Activated CD4-positive, alpha-beta T cell treated with anti-CD3 and anti-CD28 coated beads for 36 hours (primary cell): ENCODE measurements at regions of chr17 and their contacts with region 1.

Region 1: DNA sequence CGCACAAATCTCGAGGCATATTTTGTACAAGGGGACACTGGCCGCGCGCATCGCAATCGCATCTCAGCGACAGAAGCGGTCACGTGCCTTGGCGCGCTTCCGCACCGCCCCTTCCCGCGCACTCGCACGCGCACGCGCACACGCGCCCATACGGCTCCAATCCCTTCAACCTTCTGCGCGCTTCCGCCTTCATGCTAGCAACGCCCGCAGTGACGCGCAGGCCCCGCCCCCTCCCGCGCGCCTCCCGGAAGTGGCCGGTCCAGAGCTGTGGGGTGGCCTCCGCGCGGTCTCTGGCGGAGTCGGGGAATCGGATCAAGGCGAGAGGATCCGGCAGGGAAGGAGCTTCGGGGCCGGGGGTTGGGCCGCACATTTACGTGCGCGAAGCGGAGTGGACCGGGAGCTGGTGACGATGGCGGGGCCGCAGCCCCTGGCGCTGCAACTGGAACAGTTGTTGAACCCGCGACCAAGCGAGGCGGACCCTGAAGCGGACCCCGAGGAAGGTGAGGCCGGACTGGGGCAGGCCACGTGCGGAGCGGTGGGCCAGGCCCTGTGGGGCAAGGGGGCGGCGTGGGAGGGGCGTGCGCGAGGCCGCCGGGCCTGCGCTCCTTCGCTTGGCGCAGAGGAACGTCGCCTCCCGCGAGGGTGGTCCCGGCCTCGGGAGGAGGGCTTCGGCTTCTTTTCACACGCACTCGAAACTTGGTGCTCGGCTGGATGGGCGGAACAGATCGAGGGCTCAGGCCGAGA is at the start of gene AATF:
- DNase-seq: peak; percentile 97
- ATAC-seq: peak; percentile 99
- H3K4me3 Mint-ChIP-seq: peak within 1 kb of the TSS; percentile 90
- H3K27ac Mint-ChIP-seq: peak within 1 kb of the TSS; percentile 94
- H3K4me1 Mint-ChIP-seq: peaks cover 47% of the 10 kb centered on the region
- H3K27me3 Mint-ChIP-seq: peaks cover 28% of the 10 kb centered on the region
- total RNA-seq, gene AATF: 87.9 to 149 TPM

Region 2: DNA sequence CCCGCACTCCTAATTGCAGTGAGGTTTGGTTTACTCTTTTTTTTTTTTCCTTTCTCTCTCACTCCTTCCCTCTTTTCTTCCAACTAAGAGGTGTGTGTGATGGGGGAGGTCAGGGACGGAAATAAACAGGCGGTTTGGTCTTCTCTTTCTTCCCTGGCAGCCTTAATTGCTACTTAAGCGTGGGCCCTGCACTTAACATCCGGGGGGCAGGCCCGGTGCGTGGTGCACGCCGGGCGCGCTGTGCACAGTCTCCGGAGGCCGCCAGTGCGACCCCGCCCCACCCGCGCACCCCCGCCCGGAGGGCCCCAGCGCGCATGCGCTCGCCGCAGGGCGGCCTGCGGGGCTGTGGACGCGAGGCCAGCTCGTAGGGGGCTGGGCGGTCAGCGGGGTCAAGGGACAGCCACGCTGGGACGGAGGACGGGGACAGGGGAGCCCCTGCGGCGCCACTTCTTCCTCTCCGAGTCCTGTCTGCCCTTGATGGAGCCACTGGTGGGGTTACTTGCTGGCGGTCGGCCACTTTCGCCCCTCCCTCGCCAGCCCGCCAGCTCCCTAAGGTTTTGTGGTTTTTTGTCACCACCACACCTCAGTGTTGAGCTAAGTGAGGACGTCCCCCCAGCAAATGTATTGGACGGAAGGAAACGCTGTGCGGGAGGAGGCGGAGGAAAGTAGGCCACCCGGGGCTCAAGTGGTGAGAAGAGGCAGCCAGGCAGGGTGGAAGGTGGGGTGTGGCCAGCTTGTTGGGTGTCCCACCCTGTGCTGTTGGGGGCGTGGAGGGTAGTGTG is 226.6 kb before region 1 on chr17:
- CTCF ChIA-PET with region 1: interaction called, 4 read pairs
- POLR2A ChIA-PET with region 1: no interaction called
- intact Hi-C with region 1: loop called in 1 of 2 experiments (anchors 1 kb)
- DNase-seq: peak; percentile 91
- ATAC-seq: peak; percentile 94
- H3K4me3 Mint-ChIP-seq: peak overlapping the region; percentile 76
- H3K27ac Mint-ChIP-seq: peak overlapping the region; percentile 98
- H3K4me1 Mint-ChIP-seq: peaks cover 46% of the 10 kb centered on the region
- H3K27me3 Mint-ChIP-seq: no peaks in the 10 kb centered on the region

Region 3: GRCh38 chr17:36791150-36791941 is 157.5 kb before region 1 on chr17:
- CTCF ChIA-PET with region 1: no interaction called
- POLR2A ChIA-PET with region 1: no interaction called
- intact Hi-C with region 1: no loop called
- DNase-seq: no peak
- ATAC-seq: no peak
- H3K4me3 Mint-ChIP-seq: no peak overlapping the region
- H3K27ac Mint-ChIP-seq: no peak overlapping the region
- H3K4me1 Mint-ChIP-seq: no peaks in the 10 kb centered on the region
- H3K27me3 Mint-ChIP-seq: peaks cover 17% of the 10 kb centered on the region

Region 4: DNA sequence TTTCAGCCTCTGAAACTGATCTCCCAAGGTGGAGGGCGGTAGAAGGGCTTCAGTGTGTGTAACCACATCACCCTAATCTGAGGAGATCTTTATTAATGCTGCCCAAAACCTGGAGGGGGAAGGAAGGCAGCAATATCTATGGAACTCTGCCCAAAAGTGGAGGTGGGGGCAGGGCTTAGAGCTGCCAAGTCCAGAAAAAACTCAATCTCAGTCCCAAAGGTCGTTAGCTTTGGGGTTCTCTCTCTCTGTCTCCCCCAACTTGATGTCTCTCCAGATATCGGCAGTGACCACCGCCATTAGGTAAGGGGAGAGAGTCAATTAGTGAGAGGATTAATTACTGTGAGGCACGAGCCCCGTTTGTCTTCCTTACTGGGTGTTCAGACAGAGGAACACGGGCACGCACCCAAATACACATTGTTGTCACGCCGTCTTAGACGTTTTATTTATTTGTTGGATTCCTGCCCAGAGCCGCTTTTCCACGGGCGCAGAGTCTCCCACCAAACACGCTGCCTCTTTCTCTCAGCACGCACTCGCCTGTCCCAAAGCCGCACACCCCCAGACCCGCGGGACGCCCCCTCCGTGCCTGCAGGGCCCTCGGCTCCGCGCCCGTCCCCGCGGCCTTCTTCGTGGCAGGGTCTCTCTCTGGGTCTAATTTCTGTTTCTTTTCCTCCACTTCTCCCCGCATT is 17.0 kb before region 1 on chr17:
- CTCF ChIA-PET with region 1: interaction called, 5 read pairs
- POLR2A ChIA-PET with region 1: interaction called, 8 read pairs
- intact Hi-C with region 1: loop called (anchors 1 to 2 kb)
- DNase-seq: no peak
- ATAC-seq: no peak
- H3K4me3 Mint-ChIP-seq: peak overlapping the region; percentile 28
- H3K27ac Mint-ChIP-seq: no peak overlapping the region
- H3K4me1 Mint-ChIP-seq: peaks cover 53% of the 10 kb centered on the region
- H3K27me3 Mint-ChIP-seq: peaks cover 86% of the 10 kb centered on the region

Region 5: GRCh38 chr17:37025847-37026530 is 77.1 kb after region 1 on chr17:
- CTCF ChIA-PET with region 1: no interaction called
- POLR2A ChIA-PET with region 1: no interaction called
- intact Hi-C with region 1: loop called in 1 of 2 experiments (anchors 5 kb)
- DNase-seq: peak; percentile 19
- ATAC-seq: peak; percentile 98
- H3K4me3 Mint-ChIP-seq: no peak overlapping the region
- H3K27ac Mint-ChIP-seq: peak overlapping the region; percentile 28
- H3K4me1 Mint-ChIP-seq: peaks cover 29% of the 10 kb centered on the region
- H3K27me3 Mint-ChIP-seq: no peaks in the 10 kb centered on the region

Region 6: GRCh38 chr17:37358830-37359681 is 410.2 kb after region 1 on chr17:
- CTCF ChIA-PET with region 1: no interaction called
- POLR2A ChIA-PET with region 1: no interaction called
- intact Hi-C with region 1: loop called in 1 of 2 experiments (anchors 1 kb)
- DNase-seq: peak; percentile 96
- ATAC-seq: peak; percentile 98
- H3K4me3 Mint-ChIP-seq: peak overlapping the region; percentile 88
- H3K27ac Mint-ChIP-seq: peak overlapping the region; percentile 83
- H3K4me1 Mint-ChIP-seq: peaks cover 23% of the 10 kb centered on the region
- H3K27me3 Mint-ChIP-seq: no peaks in the 10 kb centered on the region

Region 7: DNA sequence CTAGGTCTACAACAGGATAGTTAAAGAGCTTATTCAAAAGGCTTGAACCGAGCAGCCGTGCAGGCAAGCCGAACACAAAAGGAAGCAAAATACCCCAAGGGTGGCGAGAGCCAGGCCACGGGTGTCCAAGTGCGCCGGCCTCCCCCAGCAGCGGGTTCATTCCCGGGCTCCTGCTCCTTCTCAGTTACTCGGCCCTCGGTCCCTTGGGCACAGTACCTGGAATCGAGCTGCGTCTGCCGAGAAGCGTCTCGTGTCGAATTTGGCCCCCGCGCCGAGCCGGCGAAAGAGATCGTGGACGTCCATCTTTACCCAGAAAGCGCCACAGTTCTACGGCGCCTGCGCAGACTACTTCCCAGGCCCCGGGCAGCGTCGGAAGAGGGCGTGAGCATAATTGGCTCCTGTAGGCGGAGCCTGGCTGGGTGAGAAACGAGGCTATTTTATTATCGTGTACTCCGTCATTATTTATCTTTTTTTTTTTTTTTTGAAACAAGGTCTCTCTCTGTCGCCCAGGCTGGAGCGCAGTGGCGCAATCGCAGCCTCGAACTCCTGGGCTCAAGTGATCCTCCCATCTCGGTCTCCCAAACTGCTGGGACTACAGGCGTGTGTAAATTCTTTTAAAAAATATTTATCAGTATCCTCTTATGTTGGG is 694.4 kb after region 1 on chr17 and contains the start of gene DDX52:
- CTCF ChIA-PET with region 1: no interaction called
- POLR2A ChIA-PET with region 1: no interaction called
- intact Hi-C with region 1: loop called in 1 of 2 experiments (anchors 1 kb)
- DNase-seq: peak; percentile 93
- ATAC-seq: peak; percentile 99
- H3K4me3 Mint-ChIP-seq: peak within 1 kb of the TSS; percentile 94
- H3K27ac Mint-ChIP-seq: peak within 1 kb of the TSS; percentile 91
- H3K4me1 Mint-ChIP-seq: peaks cover 25% of the 10 kb centered on the region
- H3K27me3 Mint-ChIP-seq: peaks cover 24% of the 10 kb centered on the region
- total RNA-seq, gene DDX52: 34.6 to 41.7 TPM